ENCODE measurements at regions of chr16 and their contacts with region 1.

Region 1: GRCh38 chr16:84754353-84754856 is 54.6 kb downstream of the USP10 start:
- DNase-seq: peak; percentile 87
- ATAC-seq: peak; percentile 86
- H3K4me3 Mint-ChIP-seq: peak overlapping the region; percentile 41
- H3K27ac Mint-ChIP-seq: no peak overlapping the region
- H3K4me1 Mint-ChIP-seq: peaks cover 62% of the 10 kb centered on the region
- H3K27me3 Mint-ChIP-seq: no peaks in the 10 kb centered on the region

Region 2: DNA sequence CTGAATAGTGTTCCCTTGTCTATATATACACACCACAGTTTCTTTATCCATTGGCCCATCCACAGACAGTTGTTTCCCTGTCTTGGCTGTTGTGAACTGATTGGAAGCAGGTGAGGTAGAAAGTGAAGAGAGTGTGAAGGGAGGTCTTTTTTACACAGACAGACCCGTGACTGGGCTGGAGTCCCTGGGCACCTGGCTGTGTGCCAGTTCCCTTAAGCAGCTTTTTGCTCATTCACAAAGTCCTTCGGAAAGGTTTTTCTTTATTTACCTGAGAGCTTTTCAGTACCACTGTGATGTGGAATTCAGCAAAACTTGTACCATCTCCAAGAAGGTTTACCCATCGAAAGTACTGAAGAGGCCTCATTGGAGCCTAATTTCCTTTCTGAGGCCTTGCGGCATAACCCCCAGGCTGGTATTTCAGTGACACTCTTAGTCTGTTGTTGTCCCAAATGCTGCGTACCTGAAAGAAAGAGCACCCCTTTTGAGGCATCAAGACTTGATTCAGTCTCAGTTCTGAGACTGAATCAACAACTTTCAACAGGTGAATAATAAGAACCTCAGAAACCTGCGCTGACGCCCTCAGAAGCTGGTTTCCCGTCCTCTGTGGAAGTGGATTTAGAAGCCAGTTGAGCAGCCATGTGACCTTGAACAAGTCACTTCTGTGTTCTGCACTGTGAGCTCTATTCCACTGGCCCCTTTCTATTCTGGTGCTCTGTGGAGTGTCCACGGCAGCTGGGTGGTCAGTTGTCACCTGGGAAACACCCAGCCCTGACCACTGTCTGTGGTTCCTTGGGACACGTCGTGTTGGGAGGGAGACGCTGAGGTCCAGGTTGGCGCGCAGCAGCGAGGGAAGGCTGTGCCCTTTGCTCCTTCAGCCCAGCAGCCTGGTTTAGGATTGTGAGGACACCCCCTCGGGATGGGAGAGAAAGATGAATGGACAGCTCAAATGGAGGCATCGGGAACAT is 11.5 kb after region 1 on chr16:
- CTCF ChIA-PET with region 1: interaction called, 20 read pairs
- POLR2A ChIA-PET with region 1: interaction called, 4 read pairs
- DNase-seq: no peak
- ATAC-seq: no peak
- H3K4me3 Mint-ChIP-seq: no peak overlapping the region
- H3K27ac Mint-ChIP-seq: peak overlapping the region; percentile 3
- H3K4me1 Mint-ChIP-seq: peaks cover 42% of the 10 kb centered on the region
- H3K27me3 Mint-ChIP-seq: no peaks in the 10 kb centered on the region

Region 3: GRCh38 chr16:84810518-84811273 is 56.3 kb after region 1 on chr16:
- CTCF ChIA-PET with region 1: interaction called, 10 read pairs
- POLR2A ChIA-PET with region 1: no interaction called
- DNase-seq: peak; percentile 58
- ATAC-seq: peak; percentile 80
- H3K4me3 Mint-ChIP-seq: peak overlapping the region; percentile 5
- H3K27ac Mint-ChIP-seq: peak overlapping the region; percentile 49
- H3K4me1 Mint-ChIP-seq: peaks cover 27% of the 10 kb centered on the region
- H3K27me3 Mint-ChIP-seq: peaks cover 4% of the 10 kb centered on the region

Region 4: DNA sequence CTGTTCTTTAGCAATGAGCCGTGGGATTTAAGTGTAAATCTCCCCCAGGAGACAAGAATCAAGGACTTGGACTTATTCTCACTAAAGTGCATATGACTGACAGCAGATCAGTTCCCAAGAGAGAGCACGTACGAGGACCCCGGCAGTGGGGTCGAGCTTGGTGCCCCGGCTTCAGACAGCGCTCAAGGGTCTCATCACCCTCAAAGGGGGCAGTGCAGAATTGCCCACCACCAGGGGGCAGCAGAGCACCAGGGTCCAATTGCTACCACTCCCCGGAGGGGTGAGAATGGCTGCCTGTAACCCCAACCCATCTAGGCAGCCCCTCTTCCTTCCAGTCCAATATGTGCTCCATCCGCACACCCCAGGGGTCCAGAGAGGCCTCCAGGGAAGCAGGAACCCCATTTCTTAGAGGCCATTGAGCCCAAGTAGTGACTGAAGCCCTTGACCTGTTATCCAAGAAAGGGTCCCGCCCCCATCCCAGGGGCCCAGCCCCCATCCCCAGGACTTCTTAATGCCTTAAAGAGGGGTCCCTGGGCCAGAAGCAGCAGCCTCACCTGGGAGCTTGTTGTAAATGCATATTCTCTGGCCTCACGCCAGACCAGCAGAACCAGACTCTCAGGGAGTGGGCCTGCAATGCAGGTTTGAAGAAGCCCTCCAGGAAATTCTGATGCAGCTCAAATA is 170.8 kb after region 1 on chr16:
- CTCF ChIA-PET with region 1: interaction called, 14 read pairs
- POLR2A ChIA-PET with region 1: no interaction called
- DNase-seq: peak; percentile 78
- ATAC-seq: peak; percentile 77
- H3K4me3 Mint-ChIP-seq: no peak overlapping the region
- H3K27ac Mint-ChIP-seq: no peak overlapping the region
- H3K4me1 Mint-ChIP-seq: no peaks in the 10 kb centered on the region
- H3K27me3 Mint-ChIP-seq: no peaks in the 10 kb centered on the region

Region 5: DNA sequence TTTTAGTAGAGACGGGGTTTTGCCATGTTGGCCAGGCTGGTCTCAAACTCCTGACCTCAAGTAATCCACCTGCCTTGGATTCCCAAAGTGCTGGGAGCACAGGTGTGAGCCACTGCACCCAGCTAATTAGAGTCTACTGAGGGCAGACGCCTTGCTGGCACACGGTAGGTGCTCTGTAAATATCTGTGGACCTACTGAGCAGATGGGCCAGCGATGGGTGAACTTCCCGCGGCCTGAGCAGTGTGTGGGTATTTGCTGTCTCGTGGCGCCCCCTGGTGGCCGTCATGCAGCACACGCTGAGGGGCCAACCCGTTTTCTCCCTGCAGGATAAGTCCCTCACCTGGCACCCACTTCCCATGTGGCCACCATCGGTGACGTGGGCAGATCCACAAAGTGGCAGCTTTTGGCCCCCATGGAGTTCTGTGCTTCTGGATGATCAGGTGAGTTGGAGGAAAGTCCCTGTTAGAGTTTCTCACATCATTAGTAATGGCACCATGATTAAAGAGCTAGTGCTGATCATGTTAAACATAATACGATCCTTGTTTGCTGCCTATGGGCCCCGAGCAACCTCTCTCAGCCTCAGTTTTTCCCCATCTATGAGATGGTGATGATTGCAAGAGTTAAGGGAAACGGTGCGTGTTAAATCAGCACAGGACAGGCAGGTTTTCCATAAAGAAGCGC is 216.2 kb after region 1 on chr16:
- CTCF ChIA-PET with region 1: interaction called, 105 read pairs
- POLR2A ChIA-PET with region 1: interaction called, 4 read pairs
- DNase-seq: peak; percentile 84
- ATAC-seq: peak; percentile 98
- H3K4me3 Mint-ChIP-seq: no peak overlapping the region
- H3K27ac Mint-ChIP-seq: no peak overlapping the region
- H3K4me1 Mint-ChIP-seq: peaks cover 5% of the 10 kb centered on the region
- H3K27me3 Mint-ChIP-seq: peaks cover 2% of the 10 kb centered on the region